ENCODE measurements at regions of chr17 and their contacts with region 1.

Region 1: DNA sequence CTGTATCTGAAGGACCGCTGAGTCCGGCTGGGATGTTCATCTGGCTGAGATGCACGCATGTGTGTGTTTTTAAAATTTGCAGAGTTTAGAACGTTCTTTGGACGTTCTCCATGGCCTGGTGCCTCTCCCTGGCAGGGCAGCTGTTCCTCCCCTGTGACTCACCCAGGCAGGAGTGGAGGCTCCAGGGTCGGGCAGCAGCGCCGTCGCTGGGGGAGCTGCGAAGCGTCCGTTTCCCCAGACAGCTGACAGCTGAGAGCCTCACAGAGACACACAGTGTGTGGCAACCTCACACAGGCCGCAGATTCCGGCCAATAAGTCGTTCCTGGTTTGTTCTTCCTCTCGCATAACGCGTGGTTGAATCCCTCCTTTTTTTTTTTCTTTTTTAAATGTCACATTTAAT is 80.6 kb downstream of the OR1D5 start:
- DNase-seq: peak; percentile 77 to 89
- ATAC-seq: peak; percentile 98
- H3K4me3 ChIP-seq: no peak overlapping the region
- H3K27ac ChIP-seq: peak overlapping the region; percentile 54 to 63
- H3K4me1 ChIP-seq: peaks cover 12% of the 10 kb centered on the region
- CTCF ChIP-seq: peak; percentile 30; the same call in 2 of the 3 replicates
- EP300 ChIP-seq: no peak
- POLR2A ChIP-seq: no peak
- RAD21 ChIP-seq: peak; percentile 56 to 67

Region 2: GRCh38 chr17:2965563-2966235 is 17.2 kb before region 1 on chr17:
- CTCF ChIA-PET with region 1: interaction called, 14 read pairs
- POLR2A ChIA-PET with region 1: no interaction called
- DNase-seq: peak; percentile 89 to 90
- ATAC-seq: peak; percentile 91
- H3K4me3 ChIP-seq: no peak overlapping the region
- H3K27ac ChIP-seq: peak overlapping the region; percentile 83 to 91
- H3K4me1 ChIP-seq: peaks cover 53% of the 10 kb centered on the region
- CTCF ChIP-seq: no peak
- EP300 ChIP-seq: no peak; a peak in 1 of 5 replicates
- POLR2A ChIP-seq: no peak
- RAD21 ChIP-seq: no peak

Region 3: DNA sequence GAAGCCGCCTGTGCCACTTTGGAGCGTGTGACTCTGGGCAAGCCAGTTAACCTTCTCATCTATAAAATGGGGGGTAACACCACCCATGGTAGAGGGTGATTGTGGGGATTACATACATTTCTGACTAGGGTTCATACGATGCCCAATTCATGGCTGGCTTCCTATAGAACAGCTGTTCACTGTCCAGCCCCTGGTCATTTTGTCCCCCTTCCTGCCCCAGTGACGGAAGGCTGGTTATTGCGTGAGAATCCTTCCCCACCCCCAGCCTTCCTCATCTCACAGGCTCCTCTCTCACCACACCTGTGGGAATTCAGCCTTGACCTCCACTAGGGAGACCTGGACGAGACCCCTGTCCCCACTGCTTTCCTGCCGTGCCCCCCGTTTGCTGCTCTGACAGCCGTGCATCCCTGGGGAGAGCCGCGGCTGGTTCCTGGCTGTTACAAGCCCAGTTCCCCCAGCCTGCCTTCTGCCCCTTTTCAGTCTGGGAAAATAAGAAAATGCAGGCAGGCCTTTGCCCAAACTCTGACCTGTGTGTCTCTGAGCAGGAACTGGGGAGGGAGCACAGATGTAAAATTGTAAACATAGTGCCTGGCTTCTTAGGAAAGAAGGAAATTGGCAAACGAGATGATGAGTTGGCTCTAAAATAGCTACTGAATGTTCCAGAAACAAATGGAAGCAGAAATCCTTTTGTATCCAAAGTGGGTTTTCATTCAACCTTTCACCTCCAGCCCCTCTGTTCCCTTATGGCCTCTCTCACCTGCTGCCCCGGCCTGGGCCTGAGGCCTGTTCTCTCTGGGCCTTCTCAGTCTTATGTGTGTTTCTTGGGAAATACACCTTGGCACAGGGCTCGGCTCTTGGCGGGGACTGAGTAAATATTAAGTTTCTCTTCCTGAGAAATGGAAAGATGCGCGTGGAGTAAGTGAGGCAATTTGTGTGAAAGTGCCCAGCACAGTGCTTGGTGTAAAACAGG is 13.3 kb after region 1 on chr17:
- CTCF ChIA-PET with region 1: interaction called, 19 read pairs
- POLR2A ChIA-PET with region 1: no interaction called
- DNase-seq: no peak
- ATAC-seq: no peak
- H3K4me3 ChIP-seq: no peak overlapping the region
- H3K27ac ChIP-seq: peak overlapping the region; percentile 36 to 71; a peak in 4 of 6 replicates
- H3K4me1 ChIP-seq: peaks cover 22% of the 10 kb centered on the region
- CTCF ChIP-seq: no peak
- EP300 ChIP-seq: no peak
- POLR2A ChIP-seq: no peak
- RAD21 ChIP-seq: no peak

Measured in A549 (cell line).